OCI-LY7 (cell line): ENCODE measurements at regions of chr12 and their contacts with region 1.

Region 1: DNA sequence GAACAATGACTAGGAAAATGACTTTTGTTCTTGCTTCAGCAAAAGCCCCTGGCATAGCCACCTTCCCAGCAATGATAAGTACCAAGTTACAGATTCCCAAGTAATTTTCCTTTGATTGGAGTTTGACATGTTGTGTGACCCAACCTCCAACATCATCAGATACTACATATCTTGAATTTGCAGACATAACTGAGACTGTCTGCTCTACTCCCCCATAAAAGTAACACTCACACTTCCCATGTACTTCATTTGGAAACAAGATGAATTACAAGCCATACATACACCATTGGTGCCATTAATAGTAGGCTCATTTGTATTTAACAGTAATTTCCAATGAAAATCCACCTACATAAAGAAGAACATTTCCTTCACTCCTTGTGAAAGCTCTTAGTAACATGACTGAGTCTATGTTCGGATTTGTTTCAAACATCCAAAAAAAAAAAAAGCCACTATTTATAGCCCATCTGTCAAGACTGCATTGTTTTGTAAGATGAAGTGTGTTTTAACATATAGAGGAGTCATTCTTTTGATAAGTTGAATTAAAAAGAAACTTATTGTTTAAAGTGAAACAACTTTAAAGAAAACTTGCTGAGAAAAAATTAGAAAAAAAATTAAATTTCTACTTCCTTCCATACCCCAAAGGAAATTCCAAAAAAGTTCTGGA is 12.0 kb upstream of the SLCO1A2 start:
- DNase-seq: no peak
- H3K4me3 ChIP-seq: no peak overlapping the region
- H3K27ac ChIP-seq: no peak overlapping the region
- H3K4me1 ChIP-seq: no peaks in the 10 kb centered on the region
- CTCF ChIP-seq: no peak

Region 2: DNA sequence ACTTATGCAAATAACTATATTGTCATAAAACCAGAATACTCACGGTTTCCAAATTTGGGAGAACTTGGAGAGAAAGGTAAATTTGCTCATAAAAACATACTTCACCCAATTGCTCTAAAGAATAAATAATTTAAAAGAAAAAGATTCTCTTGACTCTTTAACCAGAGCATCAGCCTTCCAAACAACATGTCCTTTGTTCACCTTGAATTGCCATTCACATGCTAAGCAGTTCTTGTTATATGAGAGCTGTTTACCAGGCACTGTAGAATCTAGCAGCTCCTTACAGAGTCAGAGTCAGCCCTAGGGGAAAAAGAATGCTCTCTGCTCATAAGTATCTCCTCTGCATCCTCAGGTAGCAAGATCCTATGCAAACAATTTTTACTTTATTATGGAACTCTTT is 22.1 kb before region 1 on chr12:
- CTCF ChIA-PET with region 1: no interaction called
- POLR2A ChIA-PET with region 1: interaction called, 3 read pairs
- intact Hi-C with region 1: loop called (anchors 2 kb)
- DNase-seq: no peak
- H3K4me3 ChIP-seq: no peak overlapping the region
- H3K27ac ChIP-seq: no peak overlapping the region
- H3K4me1 ChIP-seq: no peaks in the 10 kb centered on the region
- CTCF ChIP-seq: no peak

Region 3: DNA sequence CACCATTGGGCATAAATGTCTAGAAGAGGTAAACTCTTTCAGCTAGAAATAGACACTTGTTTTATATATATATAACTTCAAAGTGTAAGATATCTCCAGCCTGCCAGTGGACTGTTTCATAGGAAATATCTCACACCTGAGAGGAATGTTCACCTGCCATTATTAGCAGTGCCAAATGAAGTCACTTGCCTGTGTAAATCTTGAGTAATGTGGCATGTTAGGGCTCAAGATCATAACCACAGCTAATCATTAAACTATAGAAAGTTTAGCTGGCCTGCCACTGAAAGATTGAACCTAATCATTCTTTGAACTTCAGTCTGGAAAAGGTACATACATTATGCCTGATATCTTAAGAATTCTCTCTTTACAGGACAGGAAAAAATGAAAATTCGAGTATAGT is 453.3 kb after region 1 on chr12:
- CTCF ChIA-PET with region 1: no interaction called
- POLR2A ChIA-PET with region 1: no interaction called
- intact Hi-C with region 1: no loop called
- DNase-seq: no peak
- H3K4me3 ChIP-seq: no peak overlapping the region
- H3K27ac ChIP-seq: no peak overlapping the region
- H3K4me1 ChIP-seq: no peaks in the 10 kb centered on the region
- CTCF ChIP-seq: no peak